ENCODE measurements at regions of chr4 and their contacts with region 1.

Region 1: DNA sequence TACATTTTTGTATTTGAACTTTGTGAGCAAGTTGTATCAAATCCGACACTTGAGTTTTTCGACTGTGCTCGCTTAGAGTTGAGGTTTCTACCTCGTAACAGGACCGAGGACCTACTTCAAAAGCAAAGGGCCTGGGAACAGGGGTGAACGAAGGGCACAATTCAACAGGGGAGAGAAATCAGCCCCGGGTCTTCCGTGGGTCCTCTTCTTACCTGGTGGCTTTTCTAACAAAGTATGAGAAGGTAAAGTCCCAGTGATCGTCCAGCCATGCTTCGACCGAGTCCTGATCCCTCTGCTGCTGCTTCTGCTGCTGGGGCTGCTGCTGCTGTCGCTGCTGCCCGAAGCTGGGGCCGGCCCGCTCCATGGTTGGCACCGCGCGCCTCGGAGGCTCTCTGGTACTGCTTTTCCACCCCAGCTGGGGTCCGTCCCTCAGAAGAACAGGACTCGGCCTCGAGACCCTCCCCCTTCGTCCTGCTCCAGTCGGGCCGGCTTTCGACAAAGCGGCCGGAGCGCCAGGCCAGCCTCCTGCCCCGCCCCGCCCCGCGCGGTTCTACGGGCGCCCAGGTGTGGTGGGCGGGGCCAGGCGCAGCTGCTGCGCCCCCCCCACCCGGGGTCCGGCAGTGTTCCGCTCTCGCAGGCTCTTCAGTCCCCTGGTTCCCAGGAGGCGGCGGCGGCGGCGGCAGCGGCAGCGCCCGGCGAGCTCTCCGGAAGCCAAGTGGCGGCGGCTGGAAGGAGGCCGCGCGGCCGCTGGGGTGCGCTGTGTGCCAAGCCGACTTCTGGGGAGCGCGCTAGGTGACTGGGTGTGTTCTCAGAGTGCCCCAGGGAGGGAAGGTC is at the start of gene PDE5A:
- DNase-seq: peak; percentile 40 to 81 (median 50)
- H3K4me3 ChIP-seq: peak within 1 kb of the TSS; percentile 53 to 85 (median 75)
- H3K27ac ChIP-seq: peak within 1 kb of the TSS in 48 of 59 donors; percentile 2 to 87 (median 62)
- H3K27me3 ChIP-seq: peaks cover 0 to 8% (median 0%) of the 10 kb centered on the region in 45 donors
- CTCF ChIP-seq: peak; percentile 31 to 90 (median 73)
- total RNA-seq, gene PDE5A: 2.0 to 17.7 (median 6.1) TPM

Region 2: DNA sequence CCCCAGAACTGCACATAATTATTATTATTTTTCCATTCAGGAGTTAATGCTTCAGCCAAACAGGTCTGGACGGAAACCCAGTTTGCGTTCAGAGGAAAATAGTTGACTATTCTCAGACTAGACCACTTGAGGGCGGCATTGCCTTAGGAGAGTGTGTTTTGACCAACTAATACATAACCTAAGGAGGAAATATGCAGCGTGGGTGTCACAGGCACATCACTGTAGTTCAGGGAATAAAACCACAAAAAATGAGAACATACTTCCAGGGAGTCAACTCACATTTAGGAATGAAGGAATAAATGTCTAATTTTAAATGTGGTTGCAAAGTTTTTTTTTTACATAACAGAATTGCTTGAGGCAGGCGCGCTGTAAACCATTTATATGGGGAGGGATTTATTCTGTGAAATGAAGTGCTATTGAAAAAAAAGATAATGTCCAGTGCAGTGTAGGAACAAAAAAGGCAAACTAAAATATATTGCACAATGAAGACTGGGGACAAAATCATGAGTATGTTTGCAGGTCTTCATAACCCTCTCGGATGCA is 646.6 kb before region 1 on chr4:
- intact Hi-C with region 1: loop called in 1 of 2 experiments (anchors 10 kb)
- DNase-seq: peak in 7 of 10 donors; percentile 32 to 73 (median 51)
- H3K4me3 ChIP-seq: peak overlapping the region in 9 of 59 donors; percentile 4 to 37 (median 17)
- H3K27ac ChIP-seq: peak overlapping the region in 6 of 59 donors; percentile 2 to 46 (median 30)
- H3K27me3 ChIP-seq: no peaks in the 10 kb centered on the region
- CTCF ChIP-seq: peak; percentile 61 to 88 (median 75)

Region 3: GRCh38 chr4:119337010-119337409 is 291.5 kb before region 1 on chr4:
- intact Hi-C with region 1: no loop called
- DNase-seq: no peak
- H3K4me3 ChIP-seq: no peak overlapping the region
- H3K27ac ChIP-seq: no peak overlapping the region
- H3K27me3 ChIP-seq: no peaks in the 10 kb centered on the region
- CTCF ChIP-seq: no peak

Region 4: DNA sequence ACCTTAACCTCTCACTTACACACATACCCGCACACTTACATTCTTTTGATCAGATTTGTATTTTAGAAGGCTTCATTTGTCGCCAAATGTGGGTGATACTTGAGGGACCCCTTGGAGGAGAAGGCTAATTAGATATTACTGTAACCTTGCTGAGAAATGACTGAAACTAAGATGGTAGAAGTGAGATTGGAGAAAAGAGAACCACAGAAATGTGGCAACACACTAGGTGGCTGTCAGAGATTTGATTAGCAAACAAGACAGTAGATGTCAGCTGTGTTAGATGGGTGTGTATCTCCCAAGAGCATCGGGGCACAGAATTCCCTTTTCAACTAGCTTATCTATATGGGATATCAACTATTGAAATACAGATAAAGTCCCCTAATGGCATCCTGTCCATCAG is 157.3 kb before region 1 on chr4:
- intact Hi-C with region 1: no loop called
- DNase-seq: no peak
- H3K4me3 ChIP-seq: no peak overlapping the region
- H3K27ac ChIP-seq: no peak overlapping the region
- H3K27me3 ChIP-seq: no peaks in the 10 kb centered on the region
- CTCF ChIP-seq: no peak

Measured in dorsolateral prefrontal cortex (tissue), 120 donors.